ENCODE measurements at regions of chr2 and their contacts with region 1.

Region 1: GRCh38 chr2:112726497-112727190 is 5.8 kb downstream of the NT5DC4 start:
- DNase-seq: peak; percentile 93
- CTCF ChIP-seq: peak; percentile 99

Region 2: DNA sequence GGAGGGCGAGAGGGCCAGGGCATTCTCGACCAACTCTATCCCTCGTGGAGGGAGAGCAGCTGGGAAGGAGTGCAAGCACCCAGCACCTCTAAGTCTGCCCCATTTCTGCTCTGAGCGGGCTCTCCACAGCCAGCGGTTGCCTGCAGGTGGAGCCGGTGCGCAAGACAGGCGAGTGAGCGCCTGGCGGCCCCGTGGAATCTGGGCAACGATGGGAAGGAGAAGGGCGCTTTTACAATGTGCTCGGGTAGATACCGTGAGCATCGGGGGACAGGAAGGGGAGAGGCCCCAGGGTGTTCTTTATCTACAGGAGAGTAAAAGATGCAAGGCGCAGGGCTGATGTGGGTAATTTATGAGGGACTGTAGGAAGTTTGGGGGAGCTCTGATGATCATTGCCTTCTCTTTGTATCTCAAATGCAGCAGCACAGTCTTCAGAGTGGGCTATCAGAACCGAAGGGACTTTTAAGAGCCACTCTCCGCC is 245.6 kb before region 1 on chr2:
- CTCF ChIA-PET with region 1: interaction called, 15 read pairs
- POLR2A ChIA-PET with region 1: no interaction called
- DNase-seq: peak; percentile 89
- CTCF ChIP-seq: peak; percentile 95

Region 3: GRCh38 chr2:112606488-112606902 is 120.1 kb before region 1 on chr2:
- CTCF ChIA-PET with region 1: interaction called, 147 read pairs
- POLR2A ChIA-PET with region 1: no interaction called
- DNase-seq: no peak
- CTCF ChIP-seq: no peak

Region 4: GRCh38 chr2:112658820-112659667 is 67.6 kb before region 1 on chr2:
- CTCF ChIA-PET with region 1: interaction called, 11 read pairs
- POLR2A ChIA-PET with region 1: interaction called, 3 read pairs
- DNase-seq: no peak
- CTCF ChIP-seq: no peak

Region 5: DNA sequence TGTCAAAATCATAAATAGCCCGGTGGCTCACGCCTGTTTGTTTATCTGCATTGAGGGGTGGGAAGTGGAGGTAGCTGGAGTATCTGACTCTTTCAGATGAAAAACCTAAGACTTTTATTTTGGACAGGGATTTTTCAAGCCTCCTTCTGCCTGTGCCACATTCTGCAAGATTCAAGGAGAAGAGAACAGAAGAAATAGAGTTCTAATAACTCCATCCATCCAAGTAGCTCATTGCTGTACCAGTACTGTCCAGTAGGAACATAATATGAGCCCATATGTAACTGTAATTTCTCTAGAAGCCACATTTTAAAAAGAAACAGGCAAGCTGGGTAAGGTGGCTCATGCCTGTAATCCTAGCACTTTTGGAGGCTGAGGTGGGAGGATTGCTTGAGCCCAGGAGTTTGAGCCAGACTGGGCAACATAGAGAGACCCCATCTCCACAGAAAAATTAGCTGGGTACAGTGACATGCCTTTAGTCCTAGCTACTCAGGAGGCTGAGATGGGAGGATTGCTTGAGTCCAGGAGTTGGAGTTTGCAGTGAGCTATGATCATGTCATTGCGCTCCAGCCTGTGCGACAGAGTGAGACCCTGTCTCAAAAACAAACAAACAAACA is 41.3 kb before region 1 on chr2:
- CTCF ChIA-PET with region 1: interaction called, 37 read pairs
- POLR2A ChIA-PET with region 1: no interaction called
- DNase-seq: no peak
- CTCF ChIP-seq: no peak

Region 6: GRCh38 chr2:112706170-112706664 is 20.4 kb before region 1 on chr2:
- CTCF ChIA-PET with region 1: interaction called, 99 read pairs
- POLR2A ChIA-PET with region 1: interaction called, 5 read pairs
- DNase-seq: no peak
- CTCF ChIP-seq: no peak

Region 7: DNA sequence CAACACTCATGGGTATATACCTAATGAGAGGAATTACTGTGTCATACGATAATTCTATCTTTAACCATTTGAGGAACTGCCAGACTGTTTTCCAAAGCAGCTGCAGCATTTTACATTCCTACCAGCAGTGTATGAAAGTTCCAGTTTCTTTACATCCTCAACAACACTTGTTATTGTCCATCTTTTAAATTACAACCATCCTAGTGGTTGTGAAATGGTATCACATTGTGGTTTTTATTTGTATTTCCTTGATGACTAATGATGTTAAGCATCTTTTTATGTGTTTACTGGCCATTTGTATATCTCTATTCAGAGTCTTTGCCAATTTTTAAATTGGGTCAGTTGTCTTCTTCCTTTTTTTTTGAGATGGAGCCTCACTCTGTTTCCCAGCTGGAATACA is 41.8 kb after region 1 on chr2:
- CTCF ChIA-PET with region 1: no interaction called
- POLR2A ChIA-PET with region 1: no interaction called
- DNase-seq: no peak
- CTCF ChIP-seq: no peak

Region 8: GRCh38 chr2:112884869-112885505 is 158.3 kb after region 1 on chr2:
- CTCF ChIA-PET with region 1: interaction called, 34 read pairs
- POLR2A ChIA-PET with region 1: no interaction called
- DNase-seq: peak; percentile 83
- CTCF ChIP-seq: peak; percentile 94